Endothelial cell of umbilical vein (primary cell): ENCODE measurements at regions of chr2 and their contacts with region 1.

Region 1: DNA sequence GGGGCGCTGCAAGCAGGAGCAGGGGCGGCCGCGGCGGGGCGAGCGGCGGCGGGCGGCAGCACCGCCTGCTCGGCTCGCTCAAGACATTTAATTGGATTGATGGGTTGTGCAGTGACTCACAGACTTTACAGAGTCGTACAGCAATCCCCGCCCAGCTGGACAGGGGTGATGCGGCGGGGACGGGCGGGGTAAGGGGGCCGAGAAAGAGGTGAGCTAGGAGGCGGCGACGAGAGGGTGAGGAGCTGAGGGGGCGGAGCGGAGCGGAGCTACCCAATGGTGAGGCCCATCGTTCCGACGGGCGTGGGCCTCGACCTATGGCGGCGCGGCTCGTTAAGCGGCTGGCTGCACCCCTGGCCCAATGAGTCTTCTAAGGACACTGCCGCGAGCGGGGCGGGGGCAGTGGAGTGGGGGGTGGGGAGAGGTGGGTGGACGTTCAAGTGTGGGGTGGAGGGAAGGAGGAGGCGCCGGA is 97.1 kb upstream of the SERTAD2 start:
- DNase-seq: peak; percentile 100
- H3K4me3 ChIP-seq: peak overlapping the region; percentile 74 to 96 (median 87)
- H3K27ac ChIP-seq: peak overlapping the region; percentile 83
- H3K4me1 ChIP-seq: peaks cover 17% of the 10 kb centered on the region
- H3K27me3 ChIP-seq: no peaks in the 10 kb centered on the region
- CTCF ChIP-seq: no peak
- POLR2A ChIP-seq: peak; percentile 95

Region 2: GRCh38 chr2:64062829-64063228 is 688.0 kb before region 1 on chr2:
- CTCF ChIA-PET with region 1: no interaction called
- POLR2A ChIA-PET with region 1: no interaction called
- dilution Hi-C with region 1: no loop called
- intact Hi-C with region 1: loop called (anchors 1 kb)
- DNase-seq: peak; percentile 65
- H3K4me3 ChIP-seq: no peak overlapping the region
- H3K27ac ChIP-seq: peak overlapping the region; percentile 99
- H3K4me1 ChIP-seq: peaks cover 24% of the 10 kb centered on the region
- H3K27me3 ChIP-seq: no peaks in the 10 kb centered on the region
- CTCF ChIP-seq: no peak
- POLR2A ChIP-seq: no peak

Region 3: GRCh38 chr2:64595397-64596160 is 155.3 kb before region 1 on chr2:
- CTCF ChIA-PET with region 1: interaction called, 3 read pairs
- POLR2A ChIA-PET with region 1: interaction called, 11 read pairs
- dilution Hi-C with region 1: no loop called
- intact Hi-C with region 1: no loop called
- DNase-seq: no peak
- H3K4me3 ChIP-seq: no peak overlapping the region
- H3K27ac ChIP-seq: no peak overlapping the region
- H3K4me1 ChIP-seq: peaks cover 5% of the 10 kb centered on the region
- H3K27me3 ChIP-seq: no peaks in the 10 kb centered on the region
- CTCF ChIP-seq: no peak
- POLR2A ChIP-seq: no peak

Region 4: GRCh38 chr2:64711252-64711800 is 39.5 kb before region 1 on chr2:
- CTCF ChIA-PET with region 1: interaction called, 4 read pairs
- POLR2A ChIA-PET with region 1: interaction called, 4 read pairs
- dilution Hi-C with region 1: no loop called
- intact Hi-C with region 1: loop called (anchors 1 kb)
- DNase-seq: peak; percentile 95
- H3K4me3 ChIP-seq: no peak overlapping the region
- H3K27ac ChIP-seq: peak overlapping the region; percentile 54
- H3K4me1 ChIP-seq: peaks cover 12% of the 10 kb centered on the region
- H3K27me3 ChIP-seq: no peaks in the 10 kb centered on the region
- CTCF ChIP-seq: peak in 1 of 2 donors; percentile 7
- POLR2A ChIP-seq: peak; percentile 27

Region 5: GRCh38 chr2:64792307-64792706 is 41.5 kb after region 1 on chr2:
- CTCF ChIA-PET with region 1: interaction called, 54 read pairs
- POLR2A ChIA-PET with region 1: interaction called, 7 read pairs
- dilution Hi-C with region 1: no loop called
- intact Hi-C with region 1: loop called (anchors 1 kb)
- DNase-seq: peak; percentile 43
- H3K4me3 ChIP-seq: no peak overlapping the region
- H3K27ac ChIP-seq: peak overlapping the region; percentile 82
- H3K4me1 ChIP-seq: peaks cover 53% of the 10 kb centered on the region
- H3K27me3 ChIP-seq: no peaks in the 10 kb centered on the region
- CTCF ChIP-seq: peak in 1 of 2 donors; percentile 21
- POLR2A ChIP-seq: no peak

Region 6: GRCh38 chr2:64865073-64865830 is 114.4 kb after region 1 on chr2:
- CTCF ChIA-PET with region 1: interaction called, 20 read pairs
- POLR2A ChIA-PET with region 1: interaction called, 3 read pairs
- dilution Hi-C with region 1: no loop called
- intact Hi-C with region 1: loop called (anchors 1 kb)
- DNase-seq: peak; percentile 71
- H3K4me3 ChIP-seq: peak overlapping the region; percentile 42 to 46 (median 44)
- H3K27ac ChIP-seq: peak overlapping the region; percentile 66
- H3K4me1 ChIP-seq: peaks cover 6% of the 10 kb centered on the region
- H3K27me3 ChIP-seq: no peaks in the 10 kb centered on the region
- CTCF ChIP-seq: peak; percentile 43 to 94
- POLR2A ChIP-seq: no peak

Region 7: DNA sequence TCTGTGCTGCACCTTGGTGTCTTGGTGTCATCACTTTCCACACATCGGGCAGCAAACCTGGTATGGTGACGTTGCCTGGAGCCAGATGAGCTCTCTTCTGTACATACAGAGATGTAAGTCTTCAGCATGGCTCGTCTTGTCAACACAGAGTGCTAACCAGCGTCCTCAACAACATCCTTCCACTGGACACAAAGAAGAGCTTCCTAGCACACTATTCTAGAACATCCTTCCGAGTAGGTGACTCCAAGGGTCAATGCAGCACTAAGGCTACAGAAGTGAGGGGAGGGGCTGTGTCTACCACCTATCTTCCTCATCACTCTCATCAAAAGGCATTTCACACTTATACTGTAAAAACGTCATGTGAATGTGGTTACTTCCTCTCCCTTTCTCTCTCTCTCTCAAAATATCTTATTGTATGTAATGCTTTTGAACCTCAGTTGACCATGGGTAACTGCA is 130.2 kb after region 1 on chr2:
- CTCF ChIA-PET with region 1: no interaction called
- POLR2A ChIA-PET with region 1: no interaction called
- dilution Hi-C with region 1: no loop called
- intact Hi-C with region 1: no loop called
- DNase-seq: no peak
- H3K4me3 ChIP-seq: no peak overlapping the region
- H3K27ac ChIP-seq: no peak overlapping the region
- H3K4me1 ChIP-seq: peaks cover 7% of the 10 kb centered on the region
- H3K27me3 ChIP-seq: peaks cover 0 to 2% of the 10 kb centered on the region in 2 experiments
- CTCF ChIP-seq: no peak
- POLR2A ChIP-seq: no peak

Region 8: GRCh38 chr2:65278531-65278981 is 527.7 kb after region 1 on chr2:
- CTCF ChIA-PET with region 1: no interaction called
- POLR2A ChIA-PET with region 1: no interaction called
- dilution Hi-C with region 1: no loop called
- intact Hi-C with region 1: no loop called
- DNase-seq: no peak
- H3K4me3 ChIP-seq: no peak overlapping the region
- H3K27ac ChIP-seq: no peak overlapping the region
- H3K4me1 ChIP-seq: peaks cover 16% of the 10 kb centered on the region
- H3K27me3 ChIP-seq: peaks cover 4 to 11% of the 10 kb centered on the region in 2 experiments
- CTCF ChIP-seq: no peak
- POLR2A ChIP-seq: no peak